Aorta (tissue), 5 donors: ENCODE measurements at regions of chr19 and their contacts with region 1.

Region 1: GRCh38 chr19:46529622-46530462 is 34.2 kb upstream of the PNMA8B start:
- DNase-seq: peak; percentile 89 to 92
- ATAC-seq: peak; percentile 78
- H3K4me3 ChIP-seq: no peak overlapping the region
- H3K27ac ChIP-seq: no peak overlapping the region
- H3K4me1 ChIP-seq: no peaks in the 10 kb centered on the region
- H3K27me3 ChIP-seq: no peaks in the 10 kb centered on the region

Region 2: GRCh38 chr19:46542428-46543230 is 12.8 kb after region 1 on chr19:
- intact Hi-C with region 1: loop called (anchors 1 to 2 kb)
- DNase-seq: peak; percentile 94 to 96
- ATAC-seq: peak; percentile 91
- H3K4me3 ChIP-seq: no peak overlapping the region
- H3K27ac ChIP-seq: no peak overlapping the region
- H3K4me1 ChIP-seq: no peaks in the 10 kb centered on the region
- H3K27me3 ChIP-seq: no peaks in the 10 kb centered on the region

Region 3: GRCh38 chr19:46717034-46717723 is 187.3 kb after region 1 on chr19 and contains the start of gene PRKD2:
- intact Hi-C with region 1: no loop called
- DNase-seq: peak; percentile 95 to 98
- ATAC-seq: peak; percentile 92
- H3K4me3 ChIP-seq: peak within 1 kb of the TSS; percentile 83 to 89
- H3K27ac ChIP-seq: peak within 1 kb of the TSS in 1 of 2 donors; percentile 66
- H3K4me1 ChIP-seq: peaks cover 0 to 3% of the 10 kb centered on the region in 2 donors
- H3K27me3 ChIP-seq: no peaks in the 10 kb centered on the region
- total RNA-seq, gene PRKD2: 42.2 to 62.6 TPM